ENCODE measurements at regions of chr12 and their contacts with region 1.

Region 1: GRCh38 chr12:114767906-114768722 is 84.1 kb upstream of the TBX3 start:
- DNase-seq: peak; percentile 66
- ATAC-seq: peak; percentile 70
- H3K4me3 ChIP-seq: no peak overlapping the region
- H3K27ac ChIP-seq: peak overlapping the region; percentile 40
- H3K4me1 ChIP-seq: peaks cover 10% of the 10 kb centered on the region
- H3K27me3 ChIP-seq: no peaks in the 10 kb centered on the region
- CTCF ChIP-seq: no peak

Region 2: DNA sequence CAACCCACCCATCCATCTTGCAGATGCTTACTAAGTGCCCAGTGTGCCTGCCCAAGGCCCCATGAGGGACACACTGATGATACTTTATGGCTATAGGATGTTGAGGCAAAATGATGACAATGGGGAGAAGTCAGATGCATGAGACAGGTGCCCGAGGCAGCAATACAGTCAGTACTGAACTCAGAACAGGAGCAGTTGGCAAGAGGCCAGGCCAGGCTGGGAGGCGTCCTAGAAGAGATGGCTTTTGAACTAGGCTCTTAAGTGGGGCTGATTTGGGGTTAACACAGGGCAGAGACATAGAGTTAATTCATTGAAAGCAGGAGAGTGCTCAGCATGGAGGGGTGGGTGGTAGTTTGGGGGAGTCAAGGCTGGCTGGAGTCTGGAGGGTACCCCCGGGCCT is 1394.1 kb before region 1 on chr12:
- CTCF ChIA-PET with region 1: no interaction called
- POLR2A ChIA-PET with region 1: interaction called, 17 read pairs
- intact Hi-C with region 1: no loop called
- DNase-seq: no peak
- ATAC-seq: no peak
- H3K4me3 ChIP-seq: no peak overlapping the region
- H3K27ac ChIP-seq: no peak overlapping the region
- H3K4me1 ChIP-seq: no peaks in the 10 kb centered on the region
- H3K27me3 ChIP-seq: no peaks in the 10 kb centered on the region
- CTCF ChIP-seq: no peak

Region 3: GRCh38 chr12:114692558-114693480 is 75.3 kb before region 1 on chr12:
- CTCF ChIA-PET with region 1: no interaction called
- POLR2A ChIA-PET with region 1: no interaction called
- intact Hi-C with region 1: loop called (anchors 2 kb)
- DNase-seq: peak; percentile 72
- ATAC-seq: peak; percentile 62
- H3K4me3 ChIP-seq: peak overlapping the region; percentile 81
- H3K27ac ChIP-seq: peak overlapping the region; percentile 53
- H3K4me1 ChIP-seq: peaks cover 31% of the 10 kb centered on the region
- H3K27me3 ChIP-seq: no peaks in the 10 kb centered on the region
- CTCF ChIP-seq: peak; percentile 7; the same call in 1 of the 2 replicates

Region 4: GRCh38 chr12:114735680-114736374 is 32.3 kb before region 1 on chr12:
- CTCF ChIA-PET with region 1: interaction called, 17 read pairs
- POLR2A ChIA-PET with region 1: no interaction called
- intact Hi-C with region 1: no loop called
- DNase-seq: no peak
- ATAC-seq: no peak
- H3K4me3 ChIP-seq: no peak overlapping the region
- H3K27ac ChIP-seq: no peak overlapping the region
- H3K4me1 ChIP-seq: peaks cover 7% of the 10 kb centered on the region; the same call in 1 of the 2 replicates
- H3K27me3 ChIP-seq: no peaks in the 10 kb centered on the region
- CTCF ChIP-seq: no peak

Region 5: DNA sequence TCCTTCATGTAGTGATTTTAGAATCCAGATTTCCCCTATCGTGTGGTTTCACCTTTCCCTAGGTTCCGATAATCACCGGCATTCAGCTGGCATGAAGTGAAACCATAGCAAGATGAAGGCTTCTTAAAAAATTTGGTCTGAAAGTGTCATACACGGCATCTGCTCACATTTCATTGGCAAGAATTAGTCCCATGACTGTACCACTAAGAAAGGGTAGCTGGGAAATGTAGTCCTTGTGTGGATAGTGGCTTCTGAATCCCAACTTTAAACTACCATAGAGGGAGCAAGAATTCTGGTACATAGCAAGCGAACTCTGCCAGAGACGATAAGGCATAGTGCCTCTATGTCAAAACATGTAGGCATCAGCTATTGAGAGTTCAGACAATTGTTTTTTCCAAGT is 276.0 kb after region 1 on chr12:
- CTCF ChIA-PET with region 1: no interaction called
- POLR2A ChIA-PET with region 1: no interaction called
- intact Hi-C with region 1: no loop called
- DNase-seq: peak; percentile 19
- ATAC-seq: no peak
- H3K4me3 ChIP-seq: no peak overlapping the region
- H3K27ac ChIP-seq: no peak overlapping the region
- H3K4me1 ChIP-seq: peaks cover 6% of the 10 kb centered on the region
- H3K27me3 ChIP-seq: no peaks in the 10 kb centered on the region
- CTCF ChIP-seq: no peak

Region 6: DNA sequence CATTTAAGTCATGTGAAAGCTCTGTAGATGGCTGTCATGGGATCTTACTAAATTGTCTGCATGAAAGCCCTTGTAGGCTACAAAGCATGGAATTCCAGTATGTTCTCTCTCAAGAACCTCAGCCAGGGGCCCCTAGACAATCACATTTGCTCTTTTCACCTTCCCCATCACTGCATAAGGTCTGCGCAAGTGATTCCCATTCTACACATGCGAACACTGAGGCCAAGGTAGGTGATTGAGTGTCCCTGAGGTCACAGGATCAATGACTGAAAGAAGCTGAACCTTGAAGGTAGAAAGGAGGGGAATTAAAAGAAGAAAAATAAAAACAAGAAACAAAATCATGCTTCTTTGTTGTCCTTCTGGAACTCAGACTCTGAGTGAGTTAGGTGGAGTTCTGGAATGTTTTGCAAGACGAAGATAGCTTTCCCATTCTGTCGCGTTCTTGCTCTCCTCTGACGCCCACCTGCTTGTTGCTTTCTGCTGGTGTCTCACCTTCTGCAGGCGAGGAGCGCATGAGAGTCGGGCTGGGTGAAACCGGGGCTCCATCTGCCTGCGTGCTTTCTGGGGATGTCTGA is 1889.9 kb after region 1 on chr12:
- CTCF ChIA-PET with region 1: no interaction called
- POLR2A ChIA-PET with region 1: interaction called, 12 read pairs
- intact Hi-C with region 1: no loop called
- DNase-seq: no peak
- ATAC-seq: no peak
- H3K4me3 ChIP-seq: peak overlapping the region; percentile 42; the same call in 1 of the 2 replicates
- H3K27ac ChIP-seq: no peak overlapping the region
- H3K4me1 ChIP-seq: peaks cover 15% of the 10 kb centered on the region
- H3K27me3 ChIP-seq: 0 out of 2 replicates have a peak, but pooled peaks cover 5% of the 10 kb centered on the region
- CTCF ChIP-seq: no peak